CD4-positive, alpha-beta memory T cell (primary cell): ENCODE measurements at regions of chr6 and their contacts with region 1.

Region 1: DNA sequence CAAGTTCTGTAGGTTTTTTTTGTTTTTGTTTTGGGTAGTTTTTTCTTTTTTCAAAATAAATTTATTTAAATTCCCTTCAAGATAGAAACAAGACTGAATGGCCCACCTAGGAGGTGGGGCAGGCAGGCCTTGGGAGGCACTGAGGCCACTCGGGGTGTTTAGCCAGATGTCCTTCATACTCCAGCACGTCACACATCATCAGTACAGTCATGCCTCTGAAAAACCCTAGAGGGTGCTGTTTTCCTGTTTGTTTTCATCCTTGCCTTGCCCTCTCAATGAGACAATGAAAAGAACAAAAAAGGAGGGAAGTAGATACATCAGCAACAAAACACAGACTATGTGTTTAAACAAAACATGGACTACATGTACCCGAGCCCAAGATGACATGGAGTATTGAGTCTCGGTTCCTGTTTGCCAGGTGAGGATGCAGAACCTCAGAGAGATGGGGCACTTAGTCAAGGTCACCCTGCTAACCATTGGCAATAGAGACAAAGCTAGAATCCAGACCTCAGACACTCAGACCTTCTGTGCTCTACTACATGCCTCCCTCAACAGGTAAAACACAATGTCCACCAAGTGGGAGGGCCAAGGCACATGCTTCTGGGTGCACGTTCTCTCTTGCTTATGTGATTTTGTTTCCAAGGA is 26.8 kb upstream of the CLIC5 start:
- DNase-seq: peak in 4 of 5 donors; percentile 15 to 26 (median 23)
- H3K4me3 ChIP-seq: no peak overlapping the region
- H3K4me3 Mint-ChIP-seq: no peak overlapping the region
- H3K27ac ChIP-seq: no peak overlapping the region
- H3K27ac Mint-ChIP-seq: peak overlapping the region in 1 of 7 donors; percentile 8
- H3K4me1 ChIP-seq: no peaks in the 10 kb centered on the region
- H3K4me1 Mint-ChIP-seq: peaks cover 0 to 3% (median 0%) of the 10 kb centered on the region in 4 donors
- H3K27me3 ChIP-seq: no peaks in the 10 kb centered on the region
- H3K27me3 Mint-ChIP-seq: peaks cover 2 to 3% of the 10 kb centered on the region in 2 donors

Region 2: DNA sequence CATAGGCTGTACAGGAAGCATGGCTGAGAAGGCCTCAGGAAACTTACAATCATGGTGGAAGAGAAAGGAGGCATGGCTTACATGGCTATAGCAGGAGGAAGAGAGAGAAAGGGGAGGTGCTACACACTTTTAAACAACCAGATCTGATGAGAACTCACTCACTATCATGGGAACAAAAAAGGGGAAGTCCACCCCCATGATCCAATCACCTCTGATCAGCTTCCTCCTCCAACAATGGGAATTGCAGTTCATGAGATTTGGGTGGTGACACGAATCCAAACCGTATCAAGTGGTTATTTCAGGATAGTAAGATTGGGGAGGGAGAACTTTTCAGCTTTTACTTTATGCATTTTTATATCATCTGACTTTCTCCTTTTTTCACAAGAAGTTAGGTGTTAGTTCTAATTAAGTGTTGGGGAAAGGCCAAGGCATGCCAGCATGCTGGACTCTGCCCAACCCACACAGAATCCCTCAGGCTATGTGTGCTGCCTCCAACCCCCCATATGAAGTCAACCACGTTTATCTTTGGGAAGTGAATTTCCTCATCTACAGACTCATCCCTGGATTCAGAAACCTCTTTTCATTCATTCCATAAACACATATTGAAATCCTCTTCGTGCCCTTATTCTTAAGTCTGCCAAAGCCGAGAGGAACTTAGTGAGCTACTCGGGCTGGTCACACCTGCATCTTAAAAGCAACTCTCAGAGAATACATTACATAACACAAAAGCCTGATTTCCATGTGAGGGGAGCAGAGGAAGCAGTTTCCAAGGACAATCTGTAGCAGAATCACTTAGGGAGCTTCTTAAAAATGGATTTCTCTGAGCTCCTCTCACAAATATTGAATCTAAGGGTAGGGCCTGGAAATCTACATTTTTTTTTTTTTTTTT is 10.1 kb before region 1 on chr6:
- CTCF ChIA-PET with region 1: interaction called, 14 read pairs
- POLR2A ChIA-PET with region 1: no interaction called
- intact Hi-C with region 1: no loop called
- DNase-seq: no peak
- H3K4me3 ChIP-seq: no peak overlapping the region
- H3K4me3 Mint-ChIP-seq: peak overlapping the region in 1 of 8 donors; percentile 43
- H3K27ac ChIP-seq: no peak overlapping the region
- H3K27ac Mint-ChIP-seq: peak overlapping the region in 1 of 7 donors; percentile 70
- H3K4me1 ChIP-seq: no peaks in the 10 kb centered on the region
- H3K4me1 Mint-ChIP-seq: no peaks in the 10 kb centered on the region
- H3K27me3 ChIP-seq: no peaks in the 10 kb centered on the region
- H3K27me3 Mint-ChIP-seq: peaks cover 2 to 6% of the 10 kb centered on the region in 2 donors

Region 3: GRCh38 chr6:46160102-46160501 is 117.6 kb after region 1 on chr6:
- CTCF ChIA-PET with region 1: no interaction called
- POLR2A ChIA-PET with region 1: no interaction called
- intact Hi-C with region 1: no loop called
- DNase-seq: no peak
- H3K4me3 ChIP-seq: no peak overlapping the region
- H3K4me3 Mint-ChIP-seq: no peak overlapping the region
- H3K27ac ChIP-seq: no peak overlapping the region
- H3K27ac Mint-ChIP-seq: no peak overlapping the region
- H3K4me1 ChIP-seq: no peaks in the 10 kb centered on the region
- H3K4me1 Mint-ChIP-seq: no peaks in the 10 kb centered on the region
- H3K27me3 ChIP-seq: no peaks in the 10 kb centered on the region
- H3K27me3 Mint-ChIP-seq: peaks cover 7 to 9% of the 10 kb centered on the region in 2 donors

Region 4: DNA sequence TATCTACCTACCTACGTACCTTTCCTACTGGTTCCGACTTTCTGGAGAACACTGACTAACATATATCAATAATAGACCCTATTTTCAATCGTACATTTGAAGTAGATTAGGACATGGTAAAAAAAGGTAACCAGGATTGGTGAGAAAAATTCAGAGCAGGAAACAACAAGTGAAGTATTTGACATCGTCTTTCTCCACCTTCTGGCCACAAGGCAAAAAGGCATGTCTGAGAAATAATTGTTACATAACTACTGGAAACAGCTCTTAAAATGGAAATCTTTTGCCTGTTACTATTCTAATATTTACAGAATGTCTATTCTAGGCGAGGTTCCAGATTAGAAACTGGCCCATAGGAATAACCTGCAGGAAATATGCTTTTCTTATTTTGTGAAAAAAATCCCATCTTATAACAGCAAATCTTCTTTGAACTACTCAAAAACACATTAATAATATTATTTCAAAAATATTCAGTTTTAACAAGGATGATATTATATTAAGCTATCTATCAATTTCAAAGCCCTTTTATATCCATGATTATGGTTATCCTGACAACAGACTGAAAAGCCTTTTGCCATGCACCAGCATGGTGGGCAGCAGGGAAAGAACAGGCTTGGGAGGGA is 368.0 kb after region 1 on chr6:
- CTCF ChIA-PET with region 1: no interaction called
- POLR2A ChIA-PET with region 1: no interaction called
- intact Hi-C with region 1: loop called (anchors 1 kb)
- DNase-seq: peak in 4 of 5 donors; percentile 33 to 52 (median 44)
- H3K4me3 ChIP-seq: no peak overlapping the region
- H3K4me3 Mint-ChIP-seq: no peak overlapping the region
- H3K27ac ChIP-seq: no peak overlapping the region
- H3K27ac Mint-ChIP-seq: no peak overlapping the region
- H3K4me1 ChIP-seq: no peaks in the 10 kb centered on the region
- H3K4me1 Mint-ChIP-seq: no peaks in the 10 kb centered on the region
- H3K27me3 ChIP-seq: no peaks in the 10 kb centered on the region
- H3K27me3 Mint-ChIP-seq: peaks cover 0 to 1% of the 10 kb centered on the region in 2 donors